Posterior vena cava (tissue), 2 donors: ENCODE measurements at regions of chr11 and their contacts with region 1.

Region 1: GRCh38 chr11:35822815-35823495 is 120.9 kb upstream of the LDLRAD3 start:
- DNase-seq: no peak

Region 2: DNA sequence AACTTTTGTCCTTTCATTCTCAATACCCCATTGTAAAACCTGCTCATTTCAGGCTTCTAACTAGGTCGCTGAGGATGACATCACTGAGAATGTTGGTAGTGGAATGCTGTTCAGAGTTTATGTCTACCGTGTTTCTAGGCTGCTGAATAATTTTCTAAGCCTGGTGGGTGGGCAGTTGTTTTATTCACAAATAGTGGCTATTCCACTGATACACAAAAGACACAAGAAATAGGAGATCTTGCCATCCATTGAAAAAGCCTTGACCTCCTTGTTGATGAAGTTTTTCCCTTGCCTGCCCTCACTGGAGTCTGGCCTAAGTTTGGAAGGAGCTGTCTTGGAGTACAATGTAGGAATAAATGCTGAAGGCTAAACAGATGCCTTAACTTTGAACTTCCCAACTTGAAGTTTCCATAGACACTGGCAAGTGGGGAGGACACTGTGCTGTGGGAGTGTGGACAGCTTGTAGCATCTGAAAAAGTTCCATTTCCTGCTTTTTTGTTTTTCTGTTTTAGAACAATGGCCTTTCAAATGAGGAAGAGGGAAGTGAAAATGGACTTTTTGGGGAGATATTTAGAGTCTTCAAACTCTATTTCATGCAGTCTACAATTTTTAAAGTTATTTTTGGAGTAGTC is 101.2 kb before region 1 on chr11:
- intact Hi-C with region 1: no loop called
- DNase-seq: no peak

Region 3: DNA sequence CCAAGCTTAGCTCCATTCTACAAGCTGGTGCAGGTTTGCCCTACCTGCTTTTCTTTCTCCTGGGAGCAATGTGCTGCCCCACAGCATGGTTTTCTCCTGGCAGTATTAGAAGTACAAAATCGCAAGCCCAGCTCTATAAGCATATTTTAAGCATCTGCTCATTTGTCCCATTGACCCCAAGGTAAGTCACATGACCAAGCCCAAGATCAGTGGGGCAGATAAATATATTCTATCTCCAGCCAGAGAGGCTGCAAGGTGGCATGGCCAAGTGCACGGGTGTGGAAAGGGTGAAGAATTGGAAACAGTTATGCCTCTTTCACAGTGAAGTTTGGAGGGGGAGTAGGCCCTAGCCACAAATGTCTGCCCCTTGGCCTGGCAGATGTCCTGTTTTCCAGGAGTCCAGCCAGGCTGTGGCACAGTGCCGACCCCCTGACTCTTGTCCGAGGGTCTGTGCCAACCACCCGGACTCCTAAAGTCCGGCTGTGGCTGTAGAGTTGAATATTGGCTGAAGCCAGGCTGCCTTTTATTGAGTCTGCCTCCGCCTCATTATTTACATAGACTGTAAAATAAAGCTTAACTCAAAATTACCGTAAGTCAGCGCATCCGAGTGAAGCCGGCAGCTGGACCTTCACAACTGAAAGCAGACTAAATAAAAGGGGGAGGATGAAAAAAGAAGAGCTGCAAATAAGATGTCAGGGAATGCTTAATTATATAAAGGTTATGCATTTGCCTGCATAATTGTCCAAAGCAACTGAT is 300.6 kb after region 1 on chr11:
- intact Hi-C with region 1: loop called in 1 of 2 experiments (anchors 10 kb)
- DNase-seq: no peak

Region 4: DNA sequence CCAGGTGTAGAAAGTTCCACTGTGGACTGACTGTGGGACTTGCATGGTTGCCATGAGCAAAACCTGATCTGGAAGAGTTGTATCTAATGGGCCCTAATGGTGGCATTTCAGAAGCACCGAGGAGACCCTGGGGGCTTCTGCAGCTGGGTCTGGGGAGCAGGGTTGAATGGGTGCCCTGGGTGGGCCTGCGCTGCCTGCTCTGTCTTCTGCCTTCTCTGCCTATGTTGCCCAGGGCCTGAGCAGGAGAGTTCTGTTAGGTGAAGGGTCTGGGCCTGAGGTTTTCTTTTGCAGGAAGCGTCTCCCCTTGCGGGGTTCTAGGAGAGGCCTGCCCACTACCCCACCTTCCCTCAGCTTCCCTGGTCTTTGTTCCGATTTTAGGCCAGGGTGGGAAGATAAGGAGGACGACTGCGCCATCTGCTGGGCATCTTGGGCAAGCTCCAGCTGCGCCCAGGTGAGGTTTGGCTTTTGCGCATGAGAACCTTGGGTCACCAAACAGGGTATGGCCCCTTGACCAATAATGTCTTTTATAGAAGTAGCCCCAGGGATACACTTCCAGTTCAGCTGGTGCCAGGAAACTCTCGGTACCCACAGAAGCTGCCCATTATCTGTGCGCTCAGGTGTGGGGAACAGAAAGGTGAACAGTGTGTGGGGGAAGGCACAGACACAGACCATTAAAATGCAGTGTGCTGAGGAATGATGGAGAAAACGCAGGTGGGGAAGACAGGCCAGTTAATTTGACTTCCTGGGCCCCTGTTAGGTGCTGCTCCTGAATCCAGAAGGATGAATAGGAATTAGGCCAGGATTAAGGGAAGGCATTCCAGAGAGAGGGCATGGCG is 443.1 kb after region 1 on chr11:
- intact Hi-C with region 1: loop called in 1 of 2 experiments (anchors 10 kb)
- DNase-seq: no peak